Psoas muscle (tissue), 8 donors: ENCODE measurements at regions of chr13 and their contacts with region 1.

Region 1: GRCh38 chr13:38763439-38764381 is 76.8 kb downstream of the FREM2 start:
- DNase-seq: no peak
- ATAC-seq: peak; percentile 53 to 90 (median 70)
- H3K4me3 ChIP-seq: no peak overlapping the region
- H3K27ac ChIP-seq: no peak overlapping the region
- H3K4me1 ChIP-seq: peaks cover 13% of the 10 kb centered on the region
- H3K27me3 ChIP-seq: no peaks in the 10 kb centered on the region
- CTCF ChIP-seq: peak; percentile 68

Region 2: GRCh38 chr13:38686577-38687245 is 77.0 kb before region 1 on chr13 and contains the start of gene FREM2:
- intact Hi-C with region 1: loop called (anchors 1 to 2 kb)
- DNase-seq: peak; percentile 20 to 66
- ATAC-seq: peak; percentile 89 to 95 (median 90)
- H3K4me3 ChIP-seq: peak within 1 kb of the TSS; percentile 89
- H3K27ac ChIP-seq: peak within 1 kb of the TSS; percentile 63
- H3K4me1 ChIP-seq: no peaks in the 10 kb centered on the region
- H3K27me3 ChIP-seq: no peaks in the 10 kb centered on the region
- CTCF ChIP-seq: no peak
- total RNA-seq, gene FREM2: 2.2 to 9.4 (median 3.2) TPM

Region 3: DNA sequence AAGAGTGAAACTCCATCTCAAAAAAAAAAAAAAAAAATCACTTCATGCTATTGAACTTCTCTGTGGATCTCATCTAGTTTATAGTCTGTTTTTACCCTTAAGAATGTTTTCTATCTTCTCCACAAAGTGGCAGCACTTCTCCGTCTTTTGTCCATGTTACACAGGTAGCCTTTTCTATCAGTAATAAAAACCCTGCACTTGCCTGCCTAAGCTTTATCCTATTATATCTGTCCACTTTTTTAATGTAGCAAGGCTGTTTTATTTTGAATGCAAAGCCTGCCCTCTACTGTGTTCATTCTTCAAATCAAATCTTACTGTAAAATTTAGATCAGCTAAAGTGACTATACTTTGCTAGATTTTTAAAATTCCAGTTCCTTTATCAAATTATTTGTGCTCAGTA is 102.9 kb after region 1 on chr13:
- intact Hi-C with region 1: loop called in 1 of 2 experiments (anchors 5 kb)
- DNase-seq: no peak
- ATAC-seq: no peak
- H3K4me3 ChIP-seq: no peak overlapping the region
- H3K27ac ChIP-seq: no peak overlapping the region
- H3K4me1 ChIP-seq: no peaks in the 10 kb centered on the region
- H3K27me3 ChIP-seq: no peaks in the 10 kb centered on the region
- CTCF ChIP-seq: no peak

Region 4: DNA sequence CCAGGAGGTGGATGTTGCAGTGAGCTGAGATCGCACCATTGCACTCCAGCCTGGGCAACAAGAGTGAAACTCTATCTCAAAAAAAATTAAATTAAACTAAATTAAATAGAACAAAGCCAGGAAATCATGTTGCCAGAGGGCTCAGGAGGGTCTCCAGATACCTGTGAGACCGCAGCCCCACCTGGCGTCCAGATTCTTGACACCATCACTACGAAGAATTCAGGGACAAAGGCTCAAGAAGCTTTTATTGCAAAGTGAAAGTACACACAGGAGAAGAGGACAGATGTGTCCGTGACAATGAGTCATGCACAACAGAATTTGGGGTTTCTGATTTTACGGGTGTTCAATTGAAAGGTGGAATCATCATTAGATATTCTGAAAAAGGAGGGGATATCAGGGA is 150.4 kb after region 1 on chr13:
- intact Hi-C with region 1: loop called in 1 of 2 experiments (anchors 5 kb)
- DNase-seq: no peak
- ATAC-seq: no peak
- H3K4me3 ChIP-seq: no peak overlapping the region
- H3K27ac ChIP-seq: no peak overlapping the region
- H3K4me1 ChIP-seq: no peaks in the 10 kb centered on the region
- H3K27me3 ChIP-seq: no peaks in the 10 kb centered on the region
- CTCF ChIP-seq: no peak